GM12878 (cell line): ENCODE measurements at regions of chr19 and their contacts with region 1.

Region 1: GRCh38 chr19:13162518-13163314 is 12.5 kb downstream of the IER2 start:
- DNase-seq: peak; percentile 80
- ATAC-seq: peak; percentile 74
- H3K4me3 ChIP-seq: peak overlapping the region; percentile 74
- H3K27ac ChIP-seq: peak overlapping the region; percentile 85
- H3K4me1 ChIP-seq: peaks cover 54% of the 10 kb centered on the region
- H3K27me3 ChIP-seq: no peaks in the 10 kb centered on the region
- CTCF ChIP-seq: no peak
- EP300 ChIP-seq: no peak
- POLR2A ChIP-seq: peak; percentile 81
- RAD21 ChIP-seq: no peak

Region 2: GRCh38 chr19:13181747-13182388 is 19.2 kb after region 1 on chr19:
- CTCF ChIA-PET with region 1: interaction called, 14 read pairs
- POLR2A ChIA-PET with region 1: interaction called, 34 read pairs
- RAD21 ChIA-PET with region 1: interaction called, 16 read pairs
- SMC1A ChIA-PET with region 1: interaction called, 25 read pairs
- in situ Hi-C with region 1: no loop called
- intact Hi-C with region 1: loop called (anchors 2 kb)
- DNase-seq: no peak
- ATAC-seq: peak; percentile 87
- H3K4me3 ChIP-seq: no peak overlapping the region
- H3K27ac ChIP-seq: peak overlapping the region; percentile 52
- H3K4me1 ChIP-seq: peaks cover 17% of the 10 kb centered on the region
- H3K27me3 ChIP-seq: no peaks in the 10 kb centered on the region
- CTCF ChIP-seq: no peak
- EP300 ChIP-seq: no peak; a peak in 1 of 4 replicates
- POLR2A ChIP-seq: no peak
- RAD21 ChIP-seq: no peak